Esophagus muscularis mucosa (tissue), 4 donors: ENCODE measurements at regions of chr4 and their contacts with region 1.

Region 1: DNA sequence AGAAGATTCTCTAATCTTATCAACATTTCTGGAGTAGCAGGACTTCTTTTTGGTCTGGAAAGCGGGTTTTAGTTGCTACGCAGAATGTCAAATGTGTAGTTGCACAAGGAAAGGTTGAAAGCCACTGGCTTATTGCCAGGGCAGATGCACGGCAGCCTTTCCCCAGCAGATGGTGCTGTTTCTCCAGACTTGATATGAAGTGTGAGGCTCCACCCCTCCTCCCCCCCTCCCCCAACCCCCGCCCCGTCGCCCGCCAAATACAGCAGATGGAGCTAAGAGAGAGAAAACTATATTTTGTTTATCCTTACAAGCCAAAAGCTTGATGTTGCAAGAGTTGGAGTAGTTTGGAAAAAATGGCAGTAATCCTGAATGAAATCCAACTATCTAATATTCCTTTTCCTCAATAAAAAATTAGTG is 32.0 kb downstream of the ENOPH1 start:
- DNase-seq: peak; percentile 99
- H3K4me3 ChIP-seq: no peak overlapping the region
- H3K27ac ChIP-seq: peak overlapping the region in 3 of 4 donors; percentile 8 to 44 (median 16)
- H3K4me1 ChIP-seq: peaks cover 0 to 18% (median 13%) of the 10 kb centered on the region in 4 donors
- H3K27me3 ChIP-seq: no peaks in the 10 kb centered on the region
- CTCF ChIP-seq: peak; percentile 77 to 96 (median 95)
- EP300 ChIP-seq: no peak
- POLR2A ChIP-seq: no peak

Region 2: DNA sequence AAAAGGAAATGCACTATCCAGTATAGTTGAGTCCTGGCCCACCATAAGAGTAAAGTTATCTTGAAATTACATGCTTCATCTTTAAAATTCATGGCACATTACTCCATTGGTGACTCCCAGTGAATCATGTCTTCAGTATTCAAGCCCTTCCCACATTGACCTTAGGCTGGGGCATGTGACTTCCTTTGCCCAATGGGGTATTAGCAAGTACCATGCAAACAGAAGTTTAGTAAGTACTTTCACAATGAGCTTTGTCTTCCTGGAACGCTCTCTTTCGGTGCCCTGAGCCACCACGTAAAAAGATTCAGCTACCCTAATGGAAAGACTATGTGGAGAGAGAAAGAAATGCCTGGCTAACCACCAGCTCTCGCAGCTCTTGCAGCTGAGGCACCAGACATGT is 324.0 kb before region 1 on chr4:
- intact Hi-C with region 1: no loop called
- DNase-seq: no peak
- H3K4me3 ChIP-seq: no peak overlapping the region
- H3K27ac ChIP-seq: no peak overlapping the region
- H3K4me1 ChIP-seq: no peaks in the 10 kb centered on the region
- H3K27me3 ChIP-seq: no peaks in the 10 kb centered on the region
- CTCF ChIP-seq: no peak
- EP300 ChIP-seq: no peak
- POLR2A ChIP-seq: no peak

Region 3: DNA sequence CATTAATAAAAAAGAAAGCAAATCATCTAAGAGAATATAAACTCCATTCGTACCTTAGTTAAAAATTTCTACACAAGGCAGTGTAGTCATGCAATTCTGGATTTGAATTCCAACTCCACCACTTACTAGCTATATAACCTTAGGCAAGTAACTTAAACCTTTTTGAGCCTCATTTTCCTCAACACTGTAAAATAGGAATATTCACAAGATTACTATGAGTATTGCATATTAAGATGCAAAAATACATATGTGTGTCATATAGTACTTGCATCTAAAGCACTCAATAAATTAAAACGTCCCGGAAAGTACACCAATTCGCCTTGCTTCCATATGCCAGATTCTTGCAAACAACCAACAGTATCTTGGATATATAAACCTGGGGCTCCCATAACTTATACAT is 130.6 kb before region 1 on chr4:
- intact Hi-C with region 1: no loop called
- DNase-seq: no peak
- H3K4me3 ChIP-seq: no peak overlapping the region
- H3K27ac ChIP-seq: no peak overlapping the region
- H3K4me1 ChIP-seq: no peaks in the 10 kb centered on the region
- H3K27me3 ChIP-seq: no peaks in the 10 kb centered on the region
- CTCF ChIP-seq: no peak
- EP300 ChIP-seq: no peak
- POLR2A ChIP-seq: no peak

Region 4: DNA sequence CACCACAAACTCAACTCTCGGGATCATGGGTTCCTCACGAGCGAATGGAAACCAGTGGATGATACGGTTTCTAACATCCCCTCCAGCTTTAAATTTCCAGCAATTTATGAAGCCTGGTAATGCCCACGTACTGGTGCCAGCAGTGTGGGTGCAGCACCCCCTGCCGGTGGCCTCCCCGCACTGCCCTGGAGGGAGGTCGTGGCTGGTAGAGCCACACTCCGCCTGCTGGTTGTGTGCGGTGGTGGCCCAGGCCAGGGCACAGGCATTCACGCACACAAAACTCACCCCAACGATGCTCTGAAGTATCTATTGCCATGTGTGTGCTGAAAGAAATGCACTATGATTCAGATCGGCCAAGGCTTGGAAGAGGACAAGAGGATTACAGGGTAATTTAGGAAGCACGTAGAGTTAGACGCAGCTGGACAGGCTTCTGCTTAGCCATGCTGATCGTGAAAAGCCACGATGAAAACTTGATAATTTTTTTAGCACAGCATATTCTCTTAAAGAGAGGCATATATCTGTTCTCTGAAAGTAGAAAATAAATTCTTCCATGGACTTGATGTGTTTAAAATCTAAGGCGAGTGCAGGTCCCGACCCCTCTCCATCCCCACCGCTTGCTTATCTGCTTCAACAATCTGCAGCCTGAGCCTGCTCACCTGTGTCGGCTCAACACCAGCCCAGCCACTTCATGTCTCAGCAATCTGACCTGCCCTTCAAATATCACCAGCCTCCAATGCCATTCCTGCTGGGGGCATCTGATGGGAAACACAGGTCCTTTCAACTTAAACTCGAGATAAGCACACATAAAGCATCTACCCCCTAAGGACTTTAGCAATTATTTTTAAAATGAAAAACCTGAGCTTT is 277.1 kb after region 1 on chr4:
- intact Hi-C with region 1: loop called (anchors 10 kb)
- DNase-seq: no peak
- H3K4me3 ChIP-seq: no peak overlapping the region
- H3K27ac ChIP-seq: no peak overlapping the region
- H3K4me1 ChIP-seq: no peaks in the 10 kb centered on the region
- H3K27me3 ChIP-seq: no peaks in the 10 kb centered on the region
- CTCF ChIP-seq: peak; percentile 53 to 75 (median 64)
- EP300 ChIP-seq: no peak
- POLR2A ChIP-seq: no peak

Region 5: DNA sequence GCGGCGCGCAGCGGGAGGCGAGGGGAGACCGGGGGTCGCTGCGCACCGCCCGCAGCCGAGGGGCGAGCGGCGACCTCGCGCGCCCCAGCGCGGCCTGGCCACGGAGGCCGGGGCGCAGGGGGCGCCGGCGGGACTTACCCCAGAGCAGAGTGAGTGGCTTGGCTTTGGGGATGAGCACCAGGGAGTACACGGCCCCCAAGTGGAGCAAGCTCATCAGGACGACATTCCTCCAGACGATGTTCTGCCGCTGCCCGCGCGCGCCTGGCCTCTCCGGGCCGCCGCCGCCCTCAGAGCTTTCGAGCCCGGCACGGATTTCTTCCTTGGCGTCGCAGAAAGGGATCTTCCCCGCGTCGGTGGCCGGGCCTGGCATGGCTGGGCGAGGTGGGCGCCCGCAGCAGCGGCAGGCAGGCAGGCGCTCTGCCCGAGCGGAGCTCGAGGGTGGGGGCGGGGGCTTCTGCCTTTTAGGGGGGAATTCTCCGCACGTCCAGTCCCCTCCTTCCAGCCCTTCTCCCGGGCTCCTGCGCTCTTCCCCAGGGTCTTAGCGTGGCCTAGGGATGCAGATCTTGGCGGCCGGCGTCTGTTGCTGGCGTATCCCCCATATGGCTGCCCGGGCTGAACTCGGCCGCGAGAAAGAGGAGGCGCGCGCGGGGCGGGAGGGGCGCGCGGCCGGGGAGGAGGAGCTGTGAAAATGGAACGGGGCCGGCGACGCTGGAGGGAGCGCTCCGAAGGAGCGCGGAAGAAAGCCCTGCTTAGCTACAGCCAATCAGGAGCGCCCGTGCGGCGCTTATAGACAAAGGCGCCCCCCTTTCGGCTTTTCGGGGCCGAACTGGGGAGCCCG is 336.0 kb after region 1 on chr4 and contains the start of gene SCD5:
- intact Hi-C with region 1: loop called (anchors 5 kb)
- DNase-seq: no peak
- H3K4me3 ChIP-seq: peak within 1 kb of the TSS; percentile 66 to 94 (median 80)
- H3K27ac ChIP-seq: peak within 1 kb of the TSS; percentile 71 to 83 (median 78)
- H3K4me1 ChIP-seq: peaks cover 16 to 43% (median 35%) of the 10 kb centered on the region in 4 donors
- H3K27me3 ChIP-seq: no peaks in the 10 kb centered on the region
- CTCF ChIP-seq: no peak
- EP300 ChIP-seq: no peak
- POLR2A ChIP-seq: no peak
- total RNA-seq, gene SCD5: 17.6 to 28.4 (median 22.9) TPM